ENCODE measurements at regions of chr1 and their contacts with region 1.

Region 1: DNA sequence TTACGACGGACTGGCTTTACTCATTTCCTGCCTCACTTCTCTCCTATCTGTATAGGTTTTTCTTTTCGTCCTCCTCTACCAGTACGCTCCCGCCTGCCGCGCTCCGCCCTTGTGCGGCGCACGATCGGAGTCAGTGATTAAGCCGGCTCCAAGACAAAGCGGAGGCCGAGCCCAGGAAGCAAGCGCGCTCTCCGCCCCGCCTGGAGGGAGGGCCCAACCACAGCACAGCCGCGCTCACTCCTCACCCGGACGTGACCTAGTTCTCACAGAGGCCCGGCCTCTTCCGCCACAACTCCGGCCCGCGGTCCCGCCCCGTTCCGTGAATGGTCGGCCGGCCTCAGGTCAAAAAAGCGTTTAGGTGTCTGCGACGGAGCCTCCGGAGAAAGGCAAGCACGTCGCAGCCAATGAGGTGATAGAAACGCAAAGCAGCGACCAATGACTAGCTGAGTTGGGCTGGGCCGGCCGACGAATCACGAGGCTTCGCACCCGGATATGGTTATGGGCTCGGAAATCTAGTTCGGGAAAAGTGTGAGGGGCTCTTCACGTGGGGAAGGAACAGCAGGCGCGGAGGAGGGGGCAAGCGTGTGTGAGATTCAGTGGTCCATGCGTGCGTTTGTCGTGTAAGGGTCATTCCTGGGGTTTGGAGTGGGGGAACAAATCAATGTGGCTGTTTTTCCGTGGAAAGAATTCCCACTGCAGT is at the start of gene METTL13:
- DNase-seq: peak; percentile 99
- ATAC-seq: peak; percentile 100
- total RNA-seq, gene METTL13: 18.8 TPM

Region 2: GRCh38 chr1:171741872-171742576 is 39.3 kb before region 1 on chr1 and contains the start of gene VAMP4:
- intact Hi-C with region 1: loop called (anchors 5 kb)
- DNase-seq: peak; percentile 92
- ATAC-seq: peak; percentile 95
- total RNA-seq, gene VAMP4: 11.4 TPM

Measured in left ventricle myocardium superior (tissue), 1 donor.